Mammary epithelial cell (primary cell): ENCODE measurements at regions of chr1 and their contacts with region 1.

Region 1: DNA sequence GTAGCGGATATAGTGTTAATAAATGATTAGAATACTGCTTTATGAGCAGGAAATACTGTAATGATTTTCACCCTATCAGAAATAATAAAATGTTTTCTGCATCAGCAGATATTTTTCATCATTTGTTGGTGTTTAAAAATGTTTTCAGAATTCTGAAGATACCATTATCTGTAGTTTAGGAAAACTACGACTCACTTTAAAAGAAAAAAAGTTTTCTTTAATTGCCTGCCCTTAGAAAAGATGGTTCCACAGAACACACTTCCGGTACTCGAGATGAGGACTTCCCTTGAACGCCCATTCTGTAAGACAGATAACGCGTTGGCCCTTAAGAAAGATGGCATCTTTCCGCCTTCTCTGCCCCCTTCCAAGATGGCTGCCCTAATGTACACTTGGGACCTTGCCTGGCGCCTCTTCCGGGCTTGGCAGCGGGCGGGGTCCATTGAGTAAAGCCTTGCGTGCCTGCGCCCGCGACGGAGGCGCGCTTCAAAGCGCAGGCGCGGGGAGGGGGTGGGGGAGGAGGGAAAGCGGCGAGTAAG is at the start of gene SZRD1:
- DNase-seq: peak; percentile 99
- H3K4me3 ChIP-seq: peak within 1 kb of the TSS; percentile 63 to 73 (median 70)
- H3K27ac ChIP-seq: peak within 1 kb of the TSS; percentile 85
- H3K4me1 ChIP-seq: peaks cover 16% of the 10 kb centered on the region
- H3K27me3 ChIP-seq: no peaks in the 10 kb centered on the region
- CTCF ChIP-seq: no peak
- total RNA-seq, gene SZRD1: 46.0 to 126 TPM

Region 2: DNA sequence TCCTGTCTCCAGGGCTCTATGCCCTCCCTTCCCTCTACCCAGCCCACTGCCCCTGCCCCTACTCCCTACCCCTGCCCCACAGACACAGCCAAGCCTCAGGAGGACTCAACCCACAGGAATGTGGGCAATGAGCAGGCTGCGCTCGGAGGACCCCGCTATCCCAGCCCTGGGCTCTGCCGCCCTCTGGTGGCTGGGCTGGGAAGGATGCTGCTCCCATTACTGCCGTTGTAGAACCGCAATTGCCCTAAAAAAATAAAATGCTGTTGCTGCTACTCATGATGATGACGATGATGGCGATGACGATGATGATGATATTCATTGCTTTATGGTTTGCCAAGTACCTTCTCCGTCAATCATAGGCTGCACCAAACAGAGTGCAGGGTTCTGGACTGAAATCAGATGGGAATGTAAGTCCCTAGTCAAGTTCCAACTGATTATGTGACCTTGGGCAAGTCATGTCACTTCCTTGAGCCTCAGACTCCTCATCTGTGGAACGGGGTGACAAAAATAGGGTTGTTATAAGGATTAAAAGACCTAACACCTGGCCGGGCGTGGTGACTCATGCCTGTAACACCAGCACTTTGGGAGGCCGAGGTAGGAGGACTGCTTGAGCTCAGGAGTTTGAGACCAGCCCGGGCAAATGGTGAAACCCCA is 178.9 kb before region 1 on chr1:
- CTCF ChIA-PET with region 1: no interaction called
- dilution Hi-C with region 1: no loop called
- in situ Hi-C with region 1: no loop called
- intact Hi-C with region 1: loop called (anchors 1 kb)
- DNase-seq: peak; percentile 89
- H3K4me3 ChIP-seq: no peak overlapping the region
- H3K27ac ChIP-seq: peak overlapping the region; percentile 58
- H3K4me1 ChIP-seq: peaks cover 54% of the 10 kb centered on the region
- H3K27me3 ChIP-seq: no peaks in the 10 kb centered on the region
- CTCF ChIP-seq: peak; percentile 85 to 97

Region 3: GRCh38 chr1:16300436-16300835 is 66.4 kb before region 1 on chr1:
- CTCF ChIA-PET with region 1: no interaction called
- dilution Hi-C with region 1: loop called (anchors 5 kb)
- in situ Hi-C with region 1: no loop called
- intact Hi-C with region 1: no loop called
- DNase-seq: peak; percentile 96
- H3K4me3 ChIP-seq: no peak overlapping the region
- H3K27ac ChIP-seq: peak overlapping the region; percentile 59
- H3K4me1 ChIP-seq: peaks cover 18% of the 10 kb centered on the region
- H3K27me3 ChIP-seq: no peaks in the 10 kb centered on the region
- CTCF ChIP-seq: no peak

Region 4: DNA sequence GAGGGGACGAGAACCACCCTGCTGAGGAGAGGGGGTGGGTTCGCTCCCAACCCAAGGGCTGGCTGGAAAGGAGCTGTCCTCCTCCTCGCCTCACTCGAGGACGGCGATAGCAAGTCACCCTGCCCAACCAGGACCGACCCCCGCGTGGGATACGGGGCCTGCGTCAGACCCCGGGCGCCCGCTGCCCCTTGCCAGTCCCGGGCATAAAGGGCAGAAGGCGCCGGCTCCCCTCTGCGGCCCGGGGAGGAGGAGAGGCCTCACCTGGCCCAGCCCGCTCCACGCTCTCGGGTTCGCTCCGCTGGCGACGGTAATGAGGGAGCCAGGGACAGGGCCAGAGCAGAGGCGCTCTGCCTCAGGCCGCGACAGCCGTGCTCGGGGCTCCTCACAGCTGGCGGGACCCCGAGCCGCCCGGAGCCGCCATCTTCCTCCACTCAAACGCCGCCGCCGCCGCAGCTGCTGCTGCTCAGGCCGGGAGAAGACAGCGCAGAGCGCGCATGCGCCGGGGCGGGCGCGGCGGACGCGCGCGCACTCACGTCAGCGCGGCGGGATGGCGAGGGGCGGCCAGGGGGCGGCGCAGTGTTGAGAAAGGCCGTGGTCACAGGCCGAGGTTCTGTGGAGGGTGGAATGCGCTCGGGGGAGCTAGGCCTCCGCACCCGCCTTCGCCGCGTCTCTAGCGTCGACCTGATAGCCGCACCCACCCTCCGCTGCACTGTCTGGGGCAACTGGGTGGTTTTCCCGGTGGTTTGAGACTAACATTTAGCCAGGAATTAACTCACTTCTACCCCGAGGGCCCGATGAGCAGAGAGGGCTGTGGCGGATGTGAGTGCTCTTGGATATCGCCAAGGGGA is 14.6 kb before region 1 on chr1 and contains the start of gene FBXO42:
- CTCF ChIA-PET with region 1: no interaction called
- dilution Hi-C with region 1: no loop called
- in situ Hi-C with region 1: no loop called
- intact Hi-C with region 1: loop called (anchors 1 kb)
- DNase-seq: peak; percentile 88
- H3K4me3 ChIP-seq: peak within 1 kb of the TSS; percentile 80 to 99 (median 83)
- H3K27ac ChIP-seq: peak within 1 kb of the TSS; percentile 74
- H3K4me1 ChIP-seq: peaks cover 16% of the 10 kb centered on the region
- H3K27me3 ChIP-seq: no peaks in the 10 kb centered on the region
- CTCF ChIP-seq: peak; percentile 9 to 32
- total RNA-seq, gene FBXO42: 19.8 to 21.4 TPM

Region 5: DNA sequence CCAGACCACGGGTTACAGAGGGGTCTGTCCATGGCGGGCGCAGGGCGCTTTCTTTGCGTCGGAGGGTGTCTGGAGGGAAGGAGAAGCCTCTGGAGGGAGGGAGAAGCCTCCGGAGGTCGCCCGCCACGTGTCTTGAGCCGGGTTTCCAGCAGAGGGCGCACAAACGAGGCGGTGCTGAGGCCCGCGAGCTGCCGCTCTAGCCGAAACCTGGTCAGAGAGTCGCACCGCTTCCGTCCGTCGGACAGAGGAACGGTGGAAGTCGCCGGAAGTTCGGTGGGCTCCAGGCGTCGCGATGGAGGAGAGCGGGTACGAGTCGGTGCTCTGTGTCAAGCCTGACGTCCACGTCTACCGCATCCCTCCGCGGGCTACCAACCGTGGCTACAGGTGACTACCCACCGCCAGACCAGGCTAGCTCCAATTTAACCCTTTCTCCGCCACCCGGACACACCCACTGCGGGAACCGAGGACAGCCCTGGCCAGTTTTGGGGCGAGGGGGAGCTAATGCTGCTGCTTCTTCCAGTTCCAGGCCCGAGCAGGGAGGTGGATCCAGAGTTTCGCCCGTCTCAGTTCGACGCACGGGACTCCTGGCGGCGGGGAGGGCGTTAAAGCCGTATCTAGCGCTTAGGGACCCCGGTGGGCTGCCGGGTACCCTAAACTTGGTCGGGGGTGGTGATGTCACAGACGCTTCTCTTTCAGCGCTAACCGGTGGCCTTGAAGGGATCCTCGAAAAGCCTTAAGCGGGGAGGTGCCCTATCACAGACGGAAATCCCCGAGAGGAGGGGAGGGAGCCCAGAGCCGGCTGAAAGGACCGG is 73.9 kb after region 1 on chr1 and contains the start of gene NECAP2:
- CTCF ChIA-PET with region 1: no interaction called
- dilution Hi-C with region 1: no loop called
- in situ Hi-C with region 1: no loop called
- intact Hi-C with region 1: loop called (anchors 1 kb)
- DNase-seq: peak; percentile 80
- H3K4me3 ChIP-seq: peak within 1 kb of the TSS; percentile 76 to 99 (median 76)
- H3K27ac ChIP-seq: peak within 1 kb of the TSS; percentile 79
- H3K4me1 ChIP-seq: peaks cover 5% of the 10 kb centered on the region
- H3K27me3 ChIP-seq: no peaks in the 10 kb centered on the region
- CTCF ChIP-seq: peak; percentile 59 to 78
- total RNA-seq, gene NECAP2: 55.1 to 75.8 TPM

Region 6: GRCh38 chr1:16521288-16521583 is 154.4 kb after region 1 on chr1:
- CTCF ChIA-PET with region 1: no interaction called
- dilution Hi-C with region 1: no loop called
- in situ Hi-C with region 1: no loop called
- intact Hi-C with region 1: no loop called
- DNase-seq: no peak
- H3K4me3 ChIP-seq: no peak overlapping the region
- H3K27ac ChIP-seq: no peak overlapping the region
- H3K4me1 ChIP-seq: no peaks in the 10 kb centered on the region
- H3K27me3 ChIP-seq: peaks cover 2% of the 10 kb centered on the region
- CTCF ChIP-seq: no peak

Region 7: DNA sequence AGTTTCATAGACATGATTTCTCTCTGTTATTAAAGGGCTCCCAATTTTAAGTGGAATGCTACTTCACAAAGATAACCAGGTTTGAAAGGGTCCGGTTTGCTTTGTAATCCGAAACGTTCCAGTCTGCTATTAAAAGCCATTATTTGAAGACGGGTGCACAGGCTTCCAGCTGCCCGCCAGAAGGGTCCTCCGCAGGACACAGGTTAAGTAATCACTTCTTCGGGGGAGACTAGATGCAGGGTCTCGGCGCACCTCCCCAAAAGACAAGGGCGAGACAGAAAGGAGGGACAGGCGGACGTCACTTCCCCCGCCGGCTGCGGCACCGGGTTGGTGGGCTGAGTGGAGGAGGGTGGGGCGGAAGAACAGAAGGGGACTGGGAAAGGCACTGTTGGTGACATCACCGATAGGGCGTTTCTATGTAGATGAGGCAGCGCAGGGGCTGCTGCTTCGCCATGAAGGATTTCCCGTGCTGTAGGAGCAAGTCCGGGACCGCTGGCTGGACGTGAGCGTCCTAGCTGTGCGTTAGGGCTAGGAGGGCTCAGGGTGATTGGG is 537.8 kb after region 1 on chr1:
- CTCF ChIA-PET with region 1: no interaction called
- dilution Hi-C with region 1: no loop called
- in situ Hi-C with region 1: no loop called
- intact Hi-C with region 1: loop called (anchors 5 kb)
- DNase-seq: peak; percentile 97
- H3K4me3 ChIP-seq: peak overlapping the region; percentile 52 to 69 (median 54)
- H3K27ac ChIP-seq: peak overlapping the region; percentile 100
- H3K4me1 ChIP-seq: peaks cover 19% of the 10 kb centered on the region
- H3K27me3 ChIP-seq: no peaks in the 10 kb centered on the region
- CTCF ChIP-seq: no peak